Dorsolateral prefrontal cortex (tissue), 120 donors: ENCODE measurements at regions of chr1 and their contacts with region 1.

Region 1: DNA sequence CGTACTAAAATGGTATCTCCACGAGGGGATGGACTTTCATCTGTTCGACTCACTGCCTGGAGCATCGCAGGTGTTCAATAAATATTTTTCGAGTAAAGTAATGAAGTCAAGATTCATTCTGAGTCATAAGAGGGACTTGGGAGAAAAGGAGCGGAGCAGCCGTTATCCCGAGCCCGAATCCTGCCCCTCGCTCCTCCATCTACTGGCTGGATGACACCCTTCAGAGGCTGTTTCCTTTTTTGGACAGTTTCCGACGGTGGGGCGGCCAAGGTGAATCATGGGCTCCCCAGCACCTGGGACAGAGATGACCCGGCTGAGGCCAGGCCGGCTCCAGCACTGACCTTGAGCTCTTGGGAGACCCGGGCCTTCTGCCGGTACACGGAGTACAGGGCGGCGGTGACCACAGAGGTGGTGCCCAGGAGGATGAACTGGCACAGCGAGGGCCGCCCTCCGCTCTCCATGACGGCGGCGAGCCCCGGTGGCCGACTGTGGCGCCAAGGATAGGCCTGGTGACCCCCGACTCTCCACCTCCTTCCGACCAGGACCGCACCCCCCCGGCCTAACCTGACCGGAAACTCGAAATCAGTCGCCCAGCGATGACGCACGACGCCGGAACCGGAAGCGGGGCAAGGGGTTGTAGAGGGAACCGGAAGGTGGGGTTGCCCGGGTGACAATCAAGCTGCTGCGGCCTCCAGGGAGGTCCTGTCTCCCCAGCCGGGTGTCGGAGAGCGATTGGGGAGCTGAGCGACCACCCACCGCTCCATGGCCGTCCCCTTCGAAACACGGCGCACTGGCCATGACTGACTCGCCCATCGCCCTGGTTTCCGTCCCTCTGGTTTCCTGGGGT is at the start of gene MUL1:
- DNase-seq: peak; percentile 93 to 97 (median 95)
- H3K4me3 ChIP-seq: peak within 1 kb of the TSS; percentile 71 to 100 (median 96)
- H3K27ac ChIP-seq: peak within 1 kb of the TSS in 55 of 59 donors; percentile 10 to 92 (median 77)
- H3K27me3 ChIP-seq: peaks cover 0 to 9% (median 0%) of the 10 kb centered on the region in 45 donors
- CTCF ChIP-seq: peak in 26 of 56 donors; percentile 1 to 52 (median 24)
- total RNA-seq, gene MUL1: 16.4 to 29.4 (median 23.6) TPM

Region 2: GRCh38 chr1:20661207-20662109 is 153.7 kb after region 1 on chr1 and contains the start of gene DDOST:
- intact Hi-C with region 1: loop called in 1 of 2 experiments (anchors 5 kb)
- DNase-seq: peak; percentile 94 to 98 (median 98)
- H3K4me3 ChIP-seq: peak within 1 kb of the TSS; percentile 62 to 100 (median 94)
- H3K27ac ChIP-seq: peak within 1 kb of the TSS; percentile 9 to 96 (median 84)
- H3K27me3 ChIP-seq: no peaks in the 10 kb centered on the region
- CTCF ChIP-seq: peak; percentile 29 to 85 (median 66)
- total RNA-seq, gene DDOST: 45.1 to 81.9 (median 60.6) TPM